H1 (cell line): ENCODE measurements at regions of chr7 and their contacts with region 1.

Region 1: GRCh38 chr7:7212612-7213011 is 30.3 kb downstream of the C1GALT1 start:
- DNase-seq: no peak
- H3K4me3 ChIP-seq: no peak overlapping the region
- H3K27ac ChIP-seq: peak overlapping the region; percentile 17; the same call in 1 of the 2 replicates
- H3K4me1 ChIP-seq: peaks cover 18 to 44% (median 34%) of the 10 kb centered on the region in 4 experiments
- H3K27me3 ChIP-seq: no peaks in the 10 kb centered on the region
- CTCF ChIP-seq: no peak
- EP300 ChIP-seq: no peak
- POLR2A ChIP-seq: no peak
- RAD21 ChIP-seq: no peak

Region 2: GRCh38 chr7:7182156-7183060 is 30.2 kb before region 1 on chr7 and contains the start of gene C1GALT1:
- CTCF ChIA-PET with region 1: interaction called, 10 read pairs
- POLR2A ChIA-PET with region 1: interaction called, 55 read pairs
- DNase-seq: peak; percentile 92 to 95
- H3K4me3 ChIP-seq: peak within 1 kb of the TSS; percentile 80 to 91 (median 84)
- H3K27ac ChIP-seq: peak within 1 kb of the TSS; percentile 78
- H3K4me1 ChIP-seq: peaks cover 0 to 14% (median 10%) of the 10 kb centered on the region in 4 experiments; a peak in 5 of 7 replicates
- H3K27me3 ChIP-seq: no peaks in the 10 kb centered on the region
- CTCF ChIP-seq: peak; percentile 52 to 64 (median 63)
- EP300 ChIP-seq: no peak
- POLR2A ChIP-seq: peak; percentile 62 to 77; a peak in 2 of 3 replicates
- RAD21 ChIP-seq: peak; percentile 57 to 64
- total RNA-seq, gene C1GALT1: 94.0 and 94.2 TPM in 2 replicates

Region 3: GRCh38 chr7:7201578-7202374 is 10.8 kb before region 1 on chr7:
- CTCF ChIA-PET with region 1: no interaction called
- POLR2A ChIA-PET with region 1: interaction called, 13 read pairs
- DNase-seq: peak in 1 of 2 experiments; percentile 59
- H3K4me3 ChIP-seq: peak overlapping the region in 1 of 4 experiments; percentile 11; a peak in 1 of 8 replicates
- H3K27ac ChIP-seq: peak overlapping the region; percentile 27
- H3K4me1 ChIP-seq: peaks cover 4 to 32% (median 8%) of the 10 kb centered on the region in 4 experiments
- H3K27me3 ChIP-seq: no peaks in the 10 kb centered on the region
- CTCF ChIP-seq: no peak
- EP300 ChIP-seq: no peak
- POLR2A ChIP-seq: no peak; a peak in 1 of 3 replicates
- RAD21 ChIP-seq: no peak